WTC11 (cell line): ENCODE measurements at regions of chr12 and their contacts with region 1.

Region 1: GRCh38 chr12:13973996-13974395 is 7.4 kb downstream of the GRIN2B start:
- DNase-seq: no peak
- ATAC-seq: no peak
- H3K4me3 Mint-ChIP-seq: no peak overlapping the region
- H3K27ac Mint-ChIP-seq: no peak overlapping the region
- H3K4me1 Mint-ChIP-seq: peaks cover 36% of the 10 kb centered on the region
- H3K27me3 Mint-ChIP-seq: peaks cover 34% of the 10 kb centered on the region
- CTCF ChIP-seq: no peak

Region 2: DNA sequence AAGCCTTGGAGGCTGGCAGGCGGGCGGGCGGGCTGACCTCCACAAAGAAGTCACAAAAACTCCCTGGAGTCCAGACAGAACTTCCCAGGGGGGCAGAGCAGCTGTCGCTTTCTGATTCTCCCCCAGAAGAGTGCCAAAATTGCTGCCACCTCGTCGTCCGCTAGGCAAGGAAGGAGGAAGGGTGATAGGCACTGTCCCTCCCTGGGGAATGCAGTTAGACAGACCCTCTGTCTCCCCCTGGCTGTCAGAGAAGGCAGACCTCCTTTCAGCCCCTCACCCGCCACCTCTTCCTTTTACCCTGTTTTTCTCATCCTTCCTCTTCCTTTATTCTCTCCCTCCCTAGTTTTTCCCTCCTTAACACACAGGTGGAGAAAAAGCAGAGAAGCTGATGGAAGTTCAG is 11.3 kb before region 1 on chr12:
- CTCF ChIA-PET with region 1: interaction called, 14 read pairs
- POLR2A ChIA-PET with region 1: no interaction called
- DNase-seq: peak; percentile 58
- ATAC-seq: peak; percentile 81
- H3K4me3 Mint-ChIP-seq: no peak overlapping the region
- H3K27ac Mint-ChIP-seq: no peak overlapping the region
- H3K4me1 Mint-ChIP-seq: peaks cover 39% of the 10 kb centered on the region
- H3K27me3 Mint-ChIP-seq: no peaks in the 10 kb centered on the region; the same call in 1 of the 2 replicates
- CTCF ChIP-seq: peak; percentile 65